Posterior cingulate gyrus (tissue), 11 donors: ENCODE measurements at regions of chr14 and their contacts with region 1.

Region 1: DNA sequence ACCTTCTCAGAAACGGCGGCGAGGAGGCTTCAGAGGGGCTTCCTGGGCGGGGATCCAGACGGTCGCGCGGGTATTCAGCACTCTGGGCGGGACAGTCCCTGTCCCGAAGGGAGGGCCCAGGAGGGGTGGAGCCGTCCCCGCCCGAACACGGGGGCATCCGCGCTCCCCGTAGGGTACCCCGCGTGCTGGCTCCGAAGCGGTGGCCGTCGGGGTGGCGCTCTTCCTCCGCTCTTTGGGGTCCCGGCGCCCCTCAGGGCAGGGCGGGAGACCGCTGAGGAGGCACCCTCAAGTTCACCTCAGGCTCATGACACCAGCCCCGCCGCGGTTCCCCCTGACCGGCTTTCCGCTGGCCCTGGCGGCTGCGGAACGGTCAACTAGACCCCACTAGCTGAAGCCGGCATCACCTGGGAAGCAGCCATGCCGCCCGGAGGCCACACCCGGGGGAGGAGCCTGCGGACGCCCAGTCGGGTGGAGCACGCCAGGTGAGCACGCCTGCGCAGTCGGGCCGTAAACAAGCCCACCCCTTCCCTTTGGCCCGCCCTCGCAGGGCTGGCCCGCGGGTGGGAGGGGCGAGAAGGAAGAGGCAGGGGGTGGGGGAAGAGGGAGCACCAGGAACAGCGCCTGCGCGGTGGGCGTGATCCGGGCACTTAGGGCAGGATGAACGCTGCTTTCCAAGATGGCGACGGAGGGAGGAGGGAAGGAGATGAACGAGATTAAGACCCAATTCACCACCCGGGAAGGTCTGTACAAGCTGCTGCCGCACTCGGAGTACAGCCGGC is at the start of gene WDR20:
- DNase-seq: peak; percentile 97 to 100 (median 98)

Region 2: DNA sequence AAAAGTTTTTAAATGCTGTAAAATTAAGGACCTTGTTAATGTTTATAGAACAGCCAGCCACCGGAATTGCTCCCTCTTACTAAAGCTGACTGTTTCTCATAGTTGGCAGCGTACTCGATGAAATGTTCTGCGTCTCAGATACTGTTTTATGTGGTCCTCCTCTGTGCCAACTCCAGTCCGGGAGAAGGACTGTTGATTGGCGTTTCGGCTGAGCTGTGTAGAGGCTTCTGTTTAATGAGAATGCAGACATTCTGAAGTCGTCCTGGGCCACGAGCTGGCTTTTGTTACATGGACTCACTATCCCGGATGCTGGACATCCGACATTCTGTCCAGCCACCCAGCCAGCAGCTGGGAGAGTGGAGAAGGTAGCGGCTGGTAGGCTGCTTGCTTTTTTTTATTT is 75.6 kb after region 1 on chr14:
- intact Hi-C with region 1: loop called (anchors 5 kb)
- DNase-seq: peak in 8 of 10 donors; percentile 41 to 92 (median 60)

Region 3: DNA sequence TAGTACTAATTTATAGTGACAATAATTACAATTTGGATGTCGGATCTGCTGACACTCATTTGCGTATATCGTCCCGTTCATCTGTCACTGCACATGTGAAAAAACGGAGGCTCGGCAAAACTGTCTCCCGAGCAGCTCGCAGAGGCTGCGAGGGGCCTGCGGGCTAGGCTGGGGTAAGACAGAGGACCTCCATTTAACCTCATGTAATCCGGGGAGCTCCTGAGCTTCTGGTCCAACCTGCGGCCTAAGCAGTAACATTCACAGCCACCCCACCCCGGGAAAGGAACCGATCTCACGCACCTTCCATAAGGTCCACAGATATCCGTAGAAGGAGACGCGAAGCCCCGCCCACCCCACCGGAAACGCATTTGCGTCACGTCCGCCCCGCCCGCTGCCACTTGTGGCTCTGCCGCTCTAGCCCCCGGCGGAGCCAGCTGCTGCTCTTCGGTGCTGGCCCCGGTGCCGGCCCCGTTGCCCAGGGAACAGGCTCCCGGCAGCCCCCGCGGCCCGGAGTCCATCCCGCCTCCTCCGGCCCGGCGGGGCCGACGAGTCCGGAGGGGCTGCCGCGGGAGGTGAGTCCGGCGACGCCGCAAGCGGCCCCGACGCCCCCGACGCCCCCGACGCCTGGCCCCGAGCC is 223.2 kb after region 1 on chr14 and contains the starts of genes CINP and TECPR2:
- intact Hi-C with region 1: no loop called
- DNase-seq: peak; percentile 98 to 100 (median 100)